ENCODE measurements at regions of chr2 and their contacts with region 1.

Region 1: DNA sequence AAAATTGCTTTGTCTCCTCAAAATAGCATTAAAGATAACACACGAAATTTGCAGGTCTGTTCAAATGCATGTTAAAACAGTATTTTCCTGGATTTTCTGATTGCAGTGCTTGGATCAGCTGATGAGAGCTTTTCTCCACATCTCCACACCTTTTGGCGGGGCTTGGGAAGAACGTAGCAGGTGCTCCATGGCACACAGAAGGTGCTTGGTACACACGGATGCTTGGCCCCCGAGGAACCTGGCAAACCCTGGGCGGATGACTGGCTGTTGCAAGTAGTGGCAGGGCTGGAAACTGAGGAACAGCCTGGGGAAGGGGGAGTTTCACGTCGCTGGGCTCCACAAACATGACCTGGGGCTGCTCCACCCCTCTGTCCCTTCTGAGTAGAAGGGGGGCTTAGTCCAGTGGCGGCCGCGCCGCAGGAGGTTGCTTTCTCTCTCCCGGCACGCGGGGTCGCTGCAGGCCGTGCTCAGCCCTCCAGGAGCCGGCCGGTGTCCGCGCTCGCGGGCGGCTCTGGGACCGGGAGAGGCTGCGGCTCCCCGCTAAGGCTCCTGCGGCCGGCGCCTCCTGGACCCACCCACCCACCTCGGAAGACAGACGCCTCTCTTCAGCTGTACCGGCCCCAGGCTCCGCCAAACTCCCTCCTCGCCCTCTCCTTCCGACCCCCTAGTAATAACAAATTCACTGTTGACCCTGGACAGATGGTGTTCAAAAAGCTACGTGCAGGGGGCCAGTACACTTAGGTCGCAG is 69.3 kb downstream of the MARCO start:
- DNase-seq: peak; percentile 58 to 80
- H3K4me3 ChIP-seq: no peak overlapping the region
- H3K4me3 Mint-ChIP-seq: peak overlapping the region; percentile 24
- H3K27ac Mint-ChIP-seq: no peak overlapping the region
- H3K4me1 ChIP-seq: no peaks in the 10 kb centered on the region; the same call in 1 of the 2 replicates
- H3K4me1 Mint-ChIP-seq: peaks cover 11% of the 10 kb centered on the region
- H3K27me3 ChIP-seq: peaks cover 2% of the 10 kb centered on the region
- H3K27me3 Mint-ChIP-seq: peaks cover 10% of the 10 kb centered on the region
- CTCF ChIP-seq: peak; percentile 74 to 76

Region 2: GRCh38 chr2:119066272-119066804 is 55.0 kb after region 1 on chr2:
- CTCF ChIA-PET with region 1: no interaction called
- POLR2A ChIA-PET with region 1: no interaction called
- intact Hi-C with region 1: no loop called
- DNase-seq: no peak
- H3K4me3 ChIP-seq: no peak overlapping the region
- H3K4me3 Mint-ChIP-seq: no peak overlapping the region
- H3K27ac Mint-ChIP-seq: no peak overlapping the region
- H3K4me1 ChIP-seq: peaks cover 10% of the 10 kb centered on the region
- H3K4me1 Mint-ChIP-seq: no peaks in the 10 kb centered on the region
- H3K27me3 ChIP-seq: no peaks in the 10 kb centered on the region
- H3K27me3 Mint-ChIP-seq: no peaks in the 10 kb centered on the region
- CTCF ChIP-seq: no peak

Region 3: GRCh38 chr2:119174216-119175037 is 163.1 kb after region 1 on chr2:
- CTCF ChIA-PET with region 1: no interaction called
- POLR2A ChIA-PET with region 1: no interaction called
- intact Hi-C with region 1: loop called (anchors 1 kb)
- DNase-seq: peak; percentile 70 to 75
- H3K4me3 ChIP-seq: no peak overlapping the region
- H3K4me3 Mint-ChIP-seq: no peak overlapping the region
- H3K27ac Mint-ChIP-seq: no peak overlapping the region
- H3K4me1 ChIP-seq: no peaks in the 10 kb centered on the region
- H3K4me1 Mint-ChIP-seq: no peaks in the 10 kb centered on the region
- H3K27me3 ChIP-seq: no peaks in the 10 kb centered on the region
- H3K27me3 Mint-ChIP-seq: peaks cover 3% of the 10 kb centered on the region
- CTCF ChIP-seq: peak; percentile 83 to 92

Region 4: GRCh38 chr2:119218478-119219064 is 207.2 kb after region 1 on chr2:
- CTCF ChIA-PET with region 1: no interaction called
- POLR2A ChIA-PET with region 1: no interaction called
- intact Hi-C with region 1: no loop called
- DNase-seq: no peak
- H3K4me3 ChIP-seq: no peak overlapping the region
- H3K4me3 Mint-ChIP-seq: no peak overlapping the region
- H3K27ac Mint-ChIP-seq: no peak overlapping the region
- H3K4me1 ChIP-seq: peaks cover 8% of the 10 kb centered on the region; the same call in 1 of the 2 replicates
- H3K4me1 Mint-ChIP-seq: no peaks in the 10 kb centered on the region
- H3K27me3 ChIP-seq: no peaks in the 10 kb centered on the region
- H3K27me3 Mint-ChIP-seq: no peaks in the 10 kb centered on the region
- CTCF ChIP-seq: peak in 1 of 2 experiments; percentile 54

Region 5: DNA sequence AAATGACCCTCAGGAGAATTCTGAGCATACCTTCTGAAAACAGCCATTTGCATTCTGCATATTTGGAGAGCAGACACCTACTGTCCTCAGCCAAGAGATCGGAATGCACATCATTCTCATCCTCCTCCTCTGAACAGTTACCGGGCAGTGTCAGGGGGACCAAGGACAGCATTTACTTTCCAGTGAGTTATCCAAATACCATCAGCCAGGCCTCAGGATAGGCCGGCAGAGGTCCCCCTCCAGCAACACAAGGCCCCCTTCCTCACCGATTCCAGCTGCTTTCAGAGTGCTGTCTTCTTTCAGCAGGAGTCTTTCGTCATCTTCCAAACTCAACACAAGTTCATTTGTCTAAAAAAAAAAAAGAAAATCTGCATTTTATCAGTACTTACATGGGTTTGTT is 300.0 kb after region 1 on chr2:
- CTCF ChIA-PET with region 1: no interaction called
- POLR2A ChIA-PET with region 1: no interaction called
- intact Hi-C with region 1: loop called (anchors 5 kb)
- DNase-seq: peak in 1 of 2 experiments; percentile 33
- H3K4me3 ChIP-seq: no peak overlapping the region
- H3K4me3 Mint-ChIP-seq: no peak overlapping the region
- H3K27ac Mint-ChIP-seq: no peak overlapping the region
- H3K4me1 ChIP-seq: peaks cover 17% of the 10 kb centered on the region; the same call in 1 of the 2 replicates
- H3K4me1 Mint-ChIP-seq: peaks cover 23% of the 10 kb centered on the region
- H3K27me3 ChIP-seq: no peaks in the 10 kb centered on the region
- H3K27me3 Mint-ChIP-seq: no peaks in the 10 kb centered on the region
- CTCF ChIP-seq: peak in 1 of 2 experiments; percentile 37

Region 6: GRCh38 chr2:119659601-119660342 is 648.4 kb after region 1 on chr2:
- CTCF ChIA-PET with region 1: no interaction called
- POLR2A ChIA-PET with region 1: no interaction called
- intact Hi-C with region 1: loop called (anchors 5 kb)
- DNase-seq: peak in 1 of 2 experiments; percentile 61
- H3K4me3 ChIP-seq: no peak overlapping the region
- H3K4me3 Mint-ChIP-seq: no peak overlapping the region
- H3K27ac Mint-ChIP-seq: no peak overlapping the region
- H3K4me1 ChIP-seq: no peaks in the 10 kb centered on the region
- H3K4me1 Mint-ChIP-seq: no peaks in the 10 kb centered on the region
- H3K27me3 ChIP-seq: no peaks in the 10 kb centered on the region; the same call in 1 of the 2 replicates
- H3K27me3 Mint-ChIP-seq: peaks cover 6% of the 10 kb centered on the region
- CTCF ChIP-seq: peak; percentile 84 to 90